Thyroid gland (tissue), 4 donors: ENCODE measurements at regions of chr9 and their contacts with region 1.

Region 1: DNA sequence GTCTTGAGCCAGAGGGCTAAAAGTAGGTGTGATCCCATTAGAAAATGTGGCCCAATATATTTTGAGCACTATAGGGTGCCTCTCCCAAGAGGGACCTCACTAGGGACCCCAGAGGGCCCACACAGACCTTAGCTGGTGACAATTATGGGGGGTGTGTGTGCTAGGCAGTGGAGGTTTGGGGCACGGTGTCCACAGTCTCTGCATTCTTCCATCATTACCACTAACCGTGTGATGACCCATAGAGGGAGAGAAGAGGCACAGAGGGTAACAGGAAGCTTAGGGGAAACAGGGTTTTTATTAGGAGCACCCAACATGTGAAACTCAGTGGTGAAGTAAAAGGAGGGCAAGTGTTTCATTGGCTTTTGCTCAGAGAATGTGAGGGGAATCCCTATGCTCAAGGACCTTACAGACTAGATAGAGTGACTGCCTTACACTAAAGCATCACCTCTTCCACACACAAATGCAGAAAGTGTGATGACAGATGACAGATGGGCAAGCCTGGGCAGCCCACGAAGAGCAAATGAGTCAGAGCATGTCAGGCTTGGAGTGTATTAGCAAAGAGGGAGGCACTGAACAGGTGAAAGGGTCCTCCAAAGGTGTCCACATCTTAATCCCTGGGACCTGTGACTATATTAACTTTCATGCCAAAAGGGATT is 2.5 kb upstream of the ACTL7A start:
- DNase-seq: no peak
- H3K4me3 ChIP-seq: no peak overlapping the region
- H3K27ac ChIP-seq: no peak overlapping the region
- H3K4me1 ChIP-seq: no peaks in the 10 kb centered on the region
- H3K27me3 ChIP-seq: no peaks in the 10 kb centered on the region
- CTCF ChIP-seq: no peak
- POLR2A ChIP-seq: no peak

Region 2: GRCh38 chr9:108386859-108387384 is 472.7 kb before region 1 on chr9:
- intact Hi-C with region 1: no loop called
- DNase-seq: no peak
- H3K4me3 ChIP-seq: no peak overlapping the region
- H3K27ac ChIP-seq: no peak overlapping the region
- H3K4me1 ChIP-seq: no peaks in the 10 kb centered on the region
- H3K27me3 ChIP-seq: no peaks in the 10 kb centered on the region
- CTCF ChIP-seq: no peak
- POLR2A ChIP-seq: no peak

Region 3: DNA sequence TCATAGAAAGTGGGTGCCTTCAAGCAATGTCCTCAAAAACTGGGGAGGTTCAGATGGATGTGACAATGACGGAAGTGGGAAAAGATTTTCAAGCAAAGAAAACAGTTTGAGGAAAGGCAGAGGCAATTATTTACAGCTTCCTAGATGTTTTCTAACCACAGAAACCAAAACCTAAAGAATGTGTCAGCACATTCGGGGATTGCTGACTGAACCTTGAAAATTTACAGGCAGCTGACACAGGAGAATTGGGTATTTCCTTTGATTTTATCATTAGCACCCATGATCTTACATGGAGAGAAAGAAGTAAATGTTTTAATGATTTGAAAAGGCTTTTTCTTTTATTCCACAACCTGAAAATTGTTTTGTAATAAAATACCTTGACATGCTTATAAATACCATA is 372.8 kb before region 1 on chr9:
- intact Hi-C with region 1: no loop called
- DNase-seq: no peak
- H3K4me3 ChIP-seq: no peak overlapping the region
- H3K27ac ChIP-seq: no peak overlapping the region
- H3K4me1 ChIP-seq: no peaks in the 10 kb centered on the region
- H3K27me3 ChIP-seq: no peaks in the 10 kb centered on the region
- CTCF ChIP-seq: no peak
- POLR2A ChIP-seq: no peak

Region 4: GRCh38 chr9:108800632-108801099 is 58.9 kb before region 1 on chr9:
- intact Hi-C with region 1: loop called (anchors 10 kb)
- DNase-seq: no peak
- H3K4me3 ChIP-seq: no peak overlapping the region
- H3K27ac ChIP-seq: no peak overlapping the region
- H3K4me1 ChIP-seq: no peaks in the 10 kb centered on the region
- H3K27me3 ChIP-seq: no peaks in the 10 kb centered on the region
- CTCF ChIP-seq: no peak
- POLR2A ChIP-seq: no peak